Activated CD4-positive, alpha-beta T cell treated with anti-CD3 and anti-CD28 coated beads, Interleukin-2, amount 10 ng/mL, durations not matched to agents 24 days and 14 days (primary cell): ENCODE measurements at regions of chr3 and their contacts with region 1.

Region 1: GRCh38 chr3:18740631-18741583 is 315.8 kb upstream of the SATB1 start:
- DNase-seq: peak; percentile 90
- H3K4me3 Mint-ChIP-seq: peak overlapping the region; percentile 63
- H3K27ac Mint-ChIP-seq: peak overlapping the region; percentile 91
- H3K4me1 Mint-ChIP-seq: peaks cover 78% of the 10 kb centered on the region
- H3K27me3 Mint-ChIP-seq: no peaks in the 10 kb centered on the region

Region 2: GRCh38 chr3:18098960-18099587 is 641.8 kb before region 1 on chr3:
- intact Hi-C with region 1: loop called (anchors 1 kb)
- DNase-seq: peak; percentile 57
- H3K4me3 Mint-ChIP-seq: peak overlapping the region; percentile 11
- H3K27ac Mint-ChIP-seq: peak overlapping the region; percentile 76
- H3K4me1 Mint-ChIP-seq: peaks cover 18% of the 10 kb centered on the region
- H3K27me3 Mint-ChIP-seq: peaks cover 1% of the 10 kb centered on the region

Region 3: GRCh38 chr3:18444595-18445400 is 296.1 kb before region 1 on chr3:
- intact Hi-C with region 1: loop called (anchors 1 kb)
- DNase-seq: peak; percentile 94
- H3K4me3 Mint-ChIP-seq: peak overlapping the region; percentile 96
- H3K27ac Mint-ChIP-seq: peak overlapping the region; percentile 99
- H3K4me1 Mint-ChIP-seq: peaks cover 27% of the 10 kb centered on the region
- H3K27me3 Mint-ChIP-seq: no peaks in the 10 kb centered on the region

Region 4: GRCh38 chr3:18679238-18679637 is 61.7 kb before region 1 on chr3:
- intact Hi-C with region 1: loop called (anchors 1 kb)
- DNase-seq: peak; percentile 87
- H3K4me3 Mint-ChIP-seq: peak overlapping the region; percentile 62
- H3K27ac Mint-ChIP-seq: peak overlapping the region; percentile 78
- H3K4me1 Mint-ChIP-seq: peaks cover 70% of the 10 kb centered on the region
- H3K27me3 Mint-ChIP-seq: no peaks in the 10 kb centered on the region

Region 5: GRCh38 chr3:18758047-18758704 is 17.3 kb after region 1 on chr3:
- intact Hi-C with region 1: loop called (anchors 1 kb)
- DNase-seq: peak; percentile 88
- H3K4me3 Mint-ChIP-seq: peak overlapping the region; percentile 27
- H3K27ac Mint-ChIP-seq: peak overlapping the region; percentile 74
- H3K4me1 Mint-ChIP-seq: peaks cover 38% of the 10 kb centered on the region
- H3K27me3 Mint-ChIP-seq: no peaks in the 10 kb centered on the region

Region 6: DNA sequence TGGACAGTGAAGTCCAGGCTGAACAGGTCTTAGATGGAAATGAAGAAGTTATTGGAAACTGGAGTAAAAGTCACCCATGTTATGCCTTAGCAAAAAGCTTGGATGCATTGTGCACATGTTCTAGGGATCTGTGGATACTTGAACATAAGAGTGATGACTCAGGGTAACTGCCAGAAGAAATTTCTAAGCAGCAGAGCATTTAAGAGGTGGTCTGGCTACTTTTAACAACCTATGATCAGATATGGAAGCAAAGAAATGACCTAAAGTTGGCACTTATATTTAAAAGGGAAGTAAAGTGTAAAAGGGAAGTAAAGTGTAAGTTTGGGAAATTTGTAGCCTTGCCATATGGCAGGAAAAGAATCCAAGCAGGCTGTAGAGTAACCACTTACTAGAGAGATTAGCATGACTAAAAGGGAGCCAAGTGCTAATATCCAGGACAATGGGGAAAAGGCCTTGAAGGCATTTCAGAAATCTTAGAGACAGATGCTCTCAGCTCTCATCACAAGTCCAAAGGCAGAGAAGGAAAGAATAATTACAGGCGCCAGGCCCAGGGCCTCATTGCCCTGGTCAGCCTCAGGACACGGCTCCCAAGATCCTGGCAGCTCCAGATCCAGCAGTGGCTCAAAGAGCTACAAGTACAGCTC is 333.5 kb after region 1 on chr3:
- intact Hi-C with region 1: no loop called
- DNase-seq: no peak
- H3K4me3 Mint-ChIP-seq: no peak overlapping the region
- H3K27ac Mint-ChIP-seq: no peak overlapping the region
- H3K4me1 Mint-ChIP-seq: no peaks in the 10 kb centered on the region
- H3K27me3 Mint-ChIP-seq: peaks cover 1% of the 10 kb centered on the region

Region 7: DNA sequence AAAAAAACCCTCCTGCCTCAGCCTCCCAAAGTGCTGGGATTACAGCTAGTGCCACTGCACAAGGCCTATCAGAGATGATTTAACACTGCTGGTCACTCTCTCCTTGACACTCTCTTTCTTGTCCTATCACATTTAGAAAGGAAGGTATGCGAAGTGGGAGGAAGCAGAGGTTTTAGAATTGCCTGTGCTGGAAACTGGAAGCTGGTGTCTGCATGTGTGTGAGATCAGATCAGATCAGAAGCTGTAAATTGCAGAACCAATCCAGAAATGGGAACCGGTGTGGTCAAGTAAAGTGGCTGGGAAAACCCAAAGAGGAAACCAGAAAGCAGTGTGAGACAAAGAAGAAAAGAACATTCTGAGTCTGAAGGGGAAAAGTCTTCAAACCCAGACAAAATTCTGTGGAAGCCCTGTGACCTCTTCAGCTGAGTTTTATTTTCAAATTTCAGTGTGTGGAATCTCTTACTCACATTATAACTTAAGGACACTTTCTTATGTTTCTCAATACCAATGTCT is 1190.3 kb after region 1 on chr3:
- intact Hi-C with region 1: loop called (anchors 10 kb)
- DNase-seq: peak; percentile 73
- H3K4me3 Mint-ChIP-seq: peak overlapping the region; percentile 52
- H3K27ac Mint-ChIP-seq: peak overlapping the region; percentile 93
- H3K4me1 Mint-ChIP-seq: peaks cover 35% of the 10 kb centered on the region
- H3K27me3 Mint-ChIP-seq: peaks cover 2% of the 10 kb centered on the region